ENCODE measurements at regions of chr1 and their contacts with region 1.

Region 1: GRCh38 chr1:20446796-20447195 is 39.2 kb downstream of the CAMK2N1 start:
- DNase-seq: no peak
- H3K4me3 ChIP-seq: no peak overlapping the region
- H3K27ac ChIP-seq: no peak overlapping the region
- H3K4me1 ChIP-seq: peaks cover 2 to 15% (median 5%) of the 10 kb centered on the region in 4 experiments; a peak in 5 of 7 replicates
- H3K27me3 ChIP-seq: no peaks in the 10 kb centered on the region; a peak in 2 of 7 replicates
- CTCF ChIP-seq: no peak
- EP300 ChIP-seq: no peak
- POLR2A ChIP-seq: no peak
- RAD21 ChIP-seq: no peak

Region 2: GRCh38 chr1:20466273-20466672 is 19.5 kb after region 1 on chr1:
- CTCF ChIA-PET with region 1: interaction called, 3 read pairs
- POLR2A ChIA-PET with region 1: interaction called, 14 read pairs
- DNase-seq: no peak
- H3K4me3 ChIP-seq: no peak overlapping the region
- H3K27ac ChIP-seq: no peak overlapping the region
- H3K4me1 ChIP-seq: no peaks in the 10 kb centered on the region
- H3K27me3 ChIP-seq: peaks cover 0 to 6% (median 0%) of the 10 kb centered on the region in 4 experiments; a peak in 4 of 7 replicates
- CTCF ChIP-seq: no peak
- EP300 ChIP-seq: no peak
- POLR2A ChIP-seq: no peak
- RAD21 ChIP-seq: no peak

Measured in H1 (cell line).